Activated CD8-positive, alpha-beta T cell treated with anti-CD3 and anti-CD28 coated beads, Interleukin-2, amount 10 ng/mL, durations not matched to agents 7 days and 5 days (primary cell): ENCODE measurements at regions of chr19 and their contacts with region 1.

Region 1: GRCh38 chr19:11380653-11381534 is 3.2 kb downstream of the EPOR start:
- DNase-seq: peak; percentile 99
- ATAC-seq: peak; percentile 86
- H3K4me3 Mint-ChIP-seq: peak overlapping the region; percentile 84
- H3K27ac Mint-ChIP-seq: peak overlapping the region; percentile 98
- H3K4me1 Mint-ChIP-seq: peaks cover 54% of the 10 kb centered on the region
- H3K27me3 Mint-ChIP-seq: peaks cover 12% of the 10 kb centered on the region

Region 2: DNA sequence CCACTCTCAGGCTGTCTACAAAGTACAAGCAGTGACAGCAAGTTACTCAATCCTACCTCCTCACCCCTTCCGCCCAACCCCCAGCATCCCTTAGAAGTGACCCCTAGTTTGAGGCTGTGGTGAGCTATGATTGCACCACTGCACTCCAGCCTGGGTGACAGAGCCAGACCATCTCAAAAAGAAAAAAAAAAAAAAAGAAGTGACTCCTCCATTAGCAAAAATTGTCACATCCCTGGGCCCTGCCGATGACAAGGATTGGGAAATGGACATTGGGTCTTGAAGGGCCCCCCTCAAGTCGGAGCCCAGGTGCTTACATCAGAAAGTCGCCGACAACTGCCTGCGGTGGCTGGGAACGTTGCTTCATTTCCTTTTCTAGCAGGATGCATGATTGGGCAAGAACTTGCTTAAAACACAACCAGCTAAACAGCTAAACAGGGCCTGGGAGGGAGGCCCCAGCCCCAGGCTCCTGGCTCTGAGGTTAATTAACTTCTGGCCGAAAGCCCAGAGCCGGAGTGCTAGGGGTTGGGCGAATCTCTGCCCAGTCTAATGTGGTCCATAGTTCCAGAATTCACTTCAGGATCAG is 56.7 kb before region 1 on chr19:
- CTCF ChIA-PET with region 1: interaction called, 19 read pairs
- POLR2A ChIA-PET with region 1: interaction called, 15 read pairs
- DNase-seq: peak; percentile 79
- ATAC-seq: peak; percentile 85
- H3K4me3 Mint-ChIP-seq: peak overlapping the region; percentile 73
- H3K27ac Mint-ChIP-seq: peak overlapping the region; percentile 95
- H3K4me1 Mint-ChIP-seq: peaks cover 37% of the 10 kb centered on the region
- H3K27me3 Mint-ChIP-seq: no peaks in the 10 kb centered on the region

Region 3: GRCh38 chr19:11367528-11367927 is 13.4 kb before region 1 on chr19:
- CTCF ChIA-PET with region 1: interaction called, 11 read pairs
- POLR2A ChIA-PET with region 1: interaction called, 6 read pairs
- DNase-seq: no peak
- ATAC-seq: no peak
- H3K4me3 Mint-ChIP-seq: no peak overlapping the region
- H3K27ac Mint-ChIP-seq: no peak overlapping the region
- H3K4me1 Mint-ChIP-seq: no peaks in the 10 kb centered on the region
- H3K27me3 Mint-ChIP-seq: no peaks in the 10 kb centered on the region

Region 4: GRCh38 chr19:11399667-11400066 is 18.8 kb after region 1 on chr19:
- CTCF ChIA-PET with region 1: interaction called, 10 read pairs
- POLR2A ChIA-PET with region 1: no interaction called
- DNase-seq: no peak
- ATAC-seq: no peak
- H3K4me3 Mint-ChIP-seq: no peak overlapping the region
- H3K27ac Mint-ChIP-seq: no peak overlapping the region
- H3K4me1 Mint-ChIP-seq: no peaks in the 10 kb centered on the region
- H3K27me3 Mint-ChIP-seq: peaks cover 4% of the 10 kb centered on the region

Region 5: DNA sequence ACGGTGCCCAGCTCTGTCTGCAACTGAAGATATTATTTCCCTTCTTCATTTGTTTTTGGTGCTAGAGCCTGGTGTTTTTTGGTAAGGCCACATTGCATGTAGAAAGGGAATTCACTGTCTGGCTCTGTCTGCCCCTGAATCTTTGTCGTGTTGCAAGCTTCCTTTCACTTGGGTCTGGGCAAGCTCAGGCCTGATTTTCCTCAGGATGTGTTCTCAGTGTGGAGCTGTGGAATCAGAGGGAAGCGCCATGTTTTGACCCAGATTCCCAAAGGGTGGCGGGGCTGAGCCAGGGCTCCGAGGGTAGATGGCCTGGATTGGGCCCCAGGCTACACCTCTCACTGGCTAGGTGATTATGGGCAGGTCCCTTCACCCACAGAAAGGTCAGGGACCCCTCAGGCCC is 63.2 kb after region 1 on chr19:
- CTCF ChIA-PET with region 1: interaction called, 25 read pairs
- POLR2A ChIA-PET with region 1: interaction called, 4 read pairs
- DNase-seq: no peak
- ATAC-seq: no peak
- H3K4me3 Mint-ChIP-seq: no peak overlapping the region
- H3K27ac Mint-ChIP-seq: peak overlapping the region; percentile 46
- H3K4me1 Mint-ChIP-seq: peaks cover 9% of the 10 kb centered on the region
- H3K27me3 Mint-ChIP-seq: no peaks in the 10 kb centered on the region

Region 6: DNA sequence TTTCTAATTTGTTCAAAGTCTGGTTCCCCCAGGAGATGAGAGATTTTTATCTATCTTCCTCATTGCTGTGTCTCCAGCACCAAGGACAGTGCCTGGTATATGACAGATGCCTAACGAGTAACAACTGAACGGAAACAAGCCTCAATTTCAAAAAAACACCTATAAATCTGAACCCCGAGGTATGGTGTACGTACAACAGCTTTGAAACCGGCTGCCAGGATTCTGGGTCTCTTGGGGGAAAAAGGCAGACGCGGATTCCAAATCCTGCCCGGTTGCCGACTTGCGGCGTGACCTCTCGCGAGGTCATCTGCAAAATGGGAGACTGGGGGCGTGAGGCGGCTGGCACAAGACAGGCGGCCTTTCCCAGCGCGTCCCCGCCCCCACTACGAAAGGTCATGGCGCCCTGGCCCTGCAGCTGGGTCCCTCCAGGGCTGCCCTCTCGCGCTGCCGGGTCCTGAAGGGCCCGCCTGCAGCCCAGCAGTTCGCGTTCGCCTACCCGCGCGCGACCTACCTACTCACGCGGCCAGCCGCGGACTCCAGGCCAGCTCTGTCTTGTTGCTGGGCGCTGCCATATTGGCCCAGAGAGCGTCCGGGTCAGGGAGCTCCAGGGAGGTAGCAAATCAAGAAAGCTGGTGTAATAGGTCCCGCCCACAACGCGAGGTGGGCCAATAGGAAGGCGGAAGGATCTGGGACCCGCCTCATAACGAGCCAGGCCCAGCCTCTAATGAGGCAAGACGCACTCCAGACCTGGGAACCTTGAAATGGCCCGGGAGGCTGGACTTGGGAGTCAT is 147.9 kb after region 1 on chr19 and contains the start of gene ECSIT:
- CTCF ChIA-PET with region 1: interaction called, 10 read pairs
- POLR2A ChIA-PET with region 1: no interaction called
- DNase-seq: peak; percentile 95
- ATAC-seq: peak; percentile 99
- H3K4me3 Mint-ChIP-seq: peak within 1 kb of the TSS; percentile 96
- H3K27ac Mint-ChIP-seq: peak within 1 kb of the TSS; percentile 93
- H3K4me1 Mint-ChIP-seq: peaks cover 23% of the 10 kb centered on the region
- H3K27me3 Mint-ChIP-seq: no peaks in the 10 kb centered on the region
- total RNA-seq, gene ECSIT: 28.9 to 31.6 TPM

Region 7: DNA sequence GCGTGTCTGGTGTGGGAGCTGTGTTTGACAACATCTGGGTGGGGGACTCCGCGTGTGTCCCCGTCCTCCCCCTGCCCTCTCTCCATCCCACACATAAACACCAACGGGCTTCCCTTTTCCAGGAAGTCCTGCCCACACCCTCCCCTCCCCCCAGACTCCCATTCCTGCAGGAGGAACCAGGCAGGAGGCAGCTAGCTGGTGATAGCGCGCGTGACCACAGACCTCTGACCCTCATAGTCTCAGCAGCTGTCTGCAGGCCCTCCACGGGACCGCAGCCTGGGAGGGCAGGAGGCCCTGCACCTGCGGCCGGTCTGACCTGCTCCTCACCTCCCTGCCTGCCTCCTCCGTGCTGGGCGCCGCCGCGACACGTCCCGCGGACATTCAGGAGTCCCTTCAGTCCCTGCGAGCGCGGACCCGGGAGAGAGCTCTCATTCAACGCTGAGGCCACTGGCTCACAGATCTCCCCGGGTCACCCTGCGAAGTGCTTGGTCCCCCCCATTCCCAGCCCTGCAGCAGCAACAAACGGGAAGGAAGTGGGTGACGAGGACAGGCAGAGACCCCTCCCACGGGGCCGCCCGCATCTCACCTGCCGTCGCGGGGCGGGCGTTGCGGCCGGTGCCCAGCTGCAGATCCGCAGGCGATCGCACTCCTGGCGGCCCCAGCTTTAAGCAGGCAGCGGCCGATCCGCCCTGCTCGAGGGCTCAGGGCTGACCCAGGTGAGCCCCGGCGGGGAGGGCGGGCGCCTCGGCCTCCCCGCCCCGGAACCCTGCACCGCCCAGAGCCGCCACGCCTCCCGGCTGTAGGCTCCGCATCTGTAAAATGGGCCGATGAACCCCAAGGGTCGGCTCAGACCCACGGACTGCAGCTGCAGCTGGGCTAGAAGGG is 197.6 kb after region 1 on chr19:
- CTCF ChIA-PET with region 1: no interaction called
- POLR2A ChIA-PET with region 1: no interaction called
- DNase-seq: peak; percentile 47
- ATAC-seq: peak; percentile 59
- H3K4me3 Mint-ChIP-seq: peak overlapping the region; percentile 63
- H3K27ac Mint-ChIP-seq: no peak overlapping the region
- H3K4me1 Mint-ChIP-seq: peaks cover 47% of the 10 kb centered on the region
- H3K27me3 Mint-ChIP-seq: no peaks in the 10 kb centered on the region